Right ventricle myocardium inferior (tissue), 1 donor: ENCODE measurements at regions of chr22 and their contacts with region 1.

Region 1: GRCh38 chr22:41589391-41590241 is at the start of gene PMM1:
- DNase-seq: peak; percentile 100
- ATAC-seq: peak; percentile 99
- total RNA-seq, gene PMM1: 16.2 TPM

Region 2: GRCh38 chr22:41565403-41566054 is 24.1 kb before region 1 on chr22:
- intact Hi-C with region 1: no loop called
- DNase-seq: no peak
- ATAC-seq: peak; percentile 27

Region 3: DNA sequence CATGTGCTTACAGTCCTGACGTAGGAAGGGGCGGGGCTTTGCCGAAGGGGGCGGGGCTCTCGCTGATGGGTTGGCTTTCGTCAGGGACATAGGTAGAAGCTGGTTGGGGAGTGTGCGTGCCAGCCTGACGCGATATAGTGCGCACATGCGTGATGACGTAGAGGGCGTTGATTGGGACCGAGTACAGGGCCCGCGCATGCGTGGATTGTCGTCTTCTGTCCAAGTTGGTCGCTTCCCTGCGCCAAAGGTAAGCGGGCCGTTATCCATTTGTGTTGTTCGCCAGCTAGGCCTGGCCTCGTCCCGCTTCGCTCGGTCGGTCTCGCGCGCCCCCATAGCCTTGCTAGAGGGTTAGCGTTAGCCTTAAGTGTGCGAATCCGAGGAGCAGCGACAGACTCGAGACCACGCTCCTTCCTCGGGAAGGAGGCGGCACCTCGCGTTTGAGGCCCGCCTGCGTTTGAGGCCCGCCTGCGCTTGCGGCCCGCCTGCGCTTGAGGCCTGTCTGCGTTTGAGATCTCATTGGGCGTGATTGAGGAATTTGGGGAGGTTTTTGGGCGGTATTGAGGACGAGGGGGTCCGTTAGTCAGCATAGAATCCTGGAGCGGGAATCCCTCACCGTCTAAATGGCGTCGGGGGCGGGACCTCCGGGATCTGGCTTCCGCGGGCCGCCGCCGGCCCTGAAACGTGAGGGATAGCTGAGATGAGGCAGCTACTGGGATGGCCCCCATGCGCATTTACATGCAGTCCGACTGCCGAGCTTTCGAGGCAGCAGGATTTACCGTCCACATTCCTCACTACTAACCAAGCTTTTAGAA is 31.7 kb after region 1 on chr22 and contains the start of gene XRCC6:
- intact Hi-C with region 1: loop called (anchors 2 kb)
- DNase-seq: peak; percentile 100
- ATAC-seq: peak; percentile 98
- total RNA-seq, gene XRCC6: 172 TPM